GM10248 (cell line): ENCODE measurements at regions of chr6 and their contacts with region 1.

Region 1: DNA sequence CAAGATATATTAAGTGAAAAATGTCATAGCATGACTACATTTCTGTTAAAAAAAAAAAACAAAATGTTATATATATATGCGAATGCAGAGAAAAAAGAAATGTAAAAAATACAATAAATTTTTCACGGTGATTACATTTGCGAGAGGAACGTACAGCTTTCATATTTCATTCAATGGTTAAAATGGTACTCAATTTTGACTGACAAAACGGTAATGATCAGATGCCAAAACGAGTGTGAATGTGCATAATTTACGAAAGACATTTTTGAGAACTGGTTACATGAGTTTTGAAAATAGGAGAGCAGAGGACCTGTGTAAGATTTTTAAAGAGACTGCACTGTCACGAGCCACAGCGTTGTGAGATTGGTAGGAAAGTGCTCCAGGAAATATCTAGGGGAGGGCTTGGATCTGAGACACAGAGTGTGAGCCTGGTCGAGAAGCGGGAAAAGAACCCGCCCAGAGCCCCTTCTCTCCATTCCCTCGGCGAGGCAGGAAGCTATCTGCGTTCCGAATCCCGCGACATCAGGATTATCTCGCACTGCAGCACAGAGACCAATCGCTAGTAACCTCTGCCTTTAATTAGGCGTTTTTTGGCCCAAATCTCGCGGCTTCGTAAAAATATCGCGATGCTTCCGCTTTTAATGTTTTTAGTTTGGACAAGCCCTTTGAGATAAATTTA is 28.5 kb downstream of the TRIM27 start:
- DNase-seq: peak; percentile 91
- CTCF ChIP-seq: no peak

Region 2: GRCh38 chr6:28863604-28864320 is 31.5 kb before region 1 on chr6:
- CTCF ChIA-PET with region 1: interaction called, 14 read pairs
- POLR2A ChIA-PET with region 1: interaction called, 6 read pairs
- DNase-seq: peak; percentile 60
- CTCF ChIP-seq: no peak